Dorsolateral prefrontal cortex (tissue), 120 donors: ENCODE measurements at regions of chr19 and their contacts with region 1.

Region 1: GRCh38 chr19:56838909-56839651 is 1.4 kb downstream of the PEG3 start:
- DNase-seq: peak; percentile 95 to 100 (median 98)
- H3K4me3 ChIP-seq: peak overlapping the region in 58 of 59 donors; percentile 47 to 86 (median 72)
- H3K27ac ChIP-seq: peak overlapping the region in 55 of 59 donors; percentile 63 to 99 (median 95)
- H3K27me3 ChIP-seq: no peaks in the 10 kb centered on the region
- CTCF ChIP-seq: no peak

Region 2: DNA sequence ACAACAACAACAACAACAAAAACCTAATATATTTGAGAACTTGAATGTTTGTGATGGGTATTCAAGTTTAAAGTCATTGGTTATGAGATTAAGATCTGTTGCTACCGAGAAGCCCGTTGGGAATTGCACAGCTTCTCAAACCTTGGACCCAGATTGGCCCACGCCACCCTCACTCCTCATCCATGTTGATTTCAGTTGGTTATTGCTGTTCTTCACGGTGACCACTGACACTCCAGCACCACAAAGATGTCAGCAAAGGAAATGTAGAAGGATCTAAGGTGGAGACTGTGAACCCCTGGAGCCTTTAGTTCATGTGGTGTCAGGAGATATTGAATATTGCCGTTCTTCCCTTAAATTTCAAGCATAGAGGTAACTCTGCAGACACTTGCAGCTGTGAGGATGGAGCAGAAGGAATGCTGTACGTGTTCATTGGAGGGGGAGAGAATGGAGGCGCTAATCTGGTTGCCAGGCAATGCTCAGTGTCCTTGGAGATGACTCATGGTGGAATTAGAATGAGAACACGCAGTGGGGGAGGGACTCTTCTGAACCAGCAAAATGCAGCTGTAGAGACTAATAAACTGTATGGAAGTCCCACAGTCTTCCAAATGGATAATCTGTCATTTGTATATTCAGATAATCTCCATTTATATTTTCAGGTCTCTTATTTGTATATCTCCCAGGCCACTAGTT is 146.7 kb before region 1 on chr19:
- intact Hi-C with region 1: loop called (anchors 5 kb)
- DNase-seq: peak in 9 of 10 donors; percentile 24 to 91 (median 69)
- H3K4me3 ChIP-seq: peak overlapping the region in 8 of 59 donors; percentile 1 to 22 (median 14)
- H3K27ac ChIP-seq: peak overlapping the region in 19 of 59 donors; percentile 3 to 92 (median 84)
- H3K27me3 ChIP-seq: no peaks in the 10 kb centered on the region
- CTCF ChIP-seq: peak in 14 of 56 donors; percentile 5 to 33 (median 18)

Region 3: GRCh38 chr19:56725829-56726424 is 113.2 kb before region 1 on chr19:
- intact Hi-C with region 1: loop called (anchors 2 to 5 kb)
- DNase-seq: peak in 1 of 10 donors; percentile 65
- H3K4me3 ChIP-seq: peak overlapping the region in 29 of 59 donors; percentile 2 to 43 (median 20)
- H3K27ac ChIP-seq: peak overlapping the region in 56 of 59 donors; percentile 22 to 92 (median 77)
- H3K27me3 ChIP-seq: no peaks in the 10 kb centered on the region
- CTCF ChIP-seq: peak; percentile 53 to 89 (median 77)

Region 4: DNA sequence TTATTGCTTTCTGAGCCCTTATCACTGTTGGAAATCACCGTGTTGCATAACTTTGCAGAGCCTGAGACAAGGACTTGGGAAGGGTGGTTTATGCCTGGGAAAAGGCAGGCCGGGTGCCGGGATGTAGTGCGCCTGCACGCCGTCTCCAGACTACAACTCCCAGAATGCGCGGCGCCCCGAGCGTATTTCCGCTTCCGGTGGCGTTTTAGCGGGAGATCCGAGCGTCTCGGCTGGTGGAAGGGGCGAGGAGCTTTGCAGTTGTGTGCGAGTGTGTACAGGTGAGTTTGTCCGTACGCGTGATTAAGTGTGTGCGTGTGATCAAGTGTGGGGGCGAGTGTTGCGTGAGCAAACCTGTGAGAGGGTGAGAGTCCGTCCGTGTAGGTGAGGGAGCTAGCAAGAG is 73.9 kb before region 1 on chr19:
- intact Hi-C with region 1: loop called in 1 of 2 experiments (anchors 5 kb)
- DNase-seq: peak; percentile 76 to 93 (median 84)
- H3K4me3 ChIP-seq: peak overlapping the region; percentile 45 to 93 (median 72)
- H3K27ac ChIP-seq: peak overlapping the region in 34 of 59 donors; percentile 4 to 76 (median 47)
- H3K27me3 ChIP-seq: no peaks in the 10 kb centered on the region
- CTCF ChIP-seq: peak in 9 of 56 donors; percentile 9 to 29 (median 20)

Region 5: DNA sequence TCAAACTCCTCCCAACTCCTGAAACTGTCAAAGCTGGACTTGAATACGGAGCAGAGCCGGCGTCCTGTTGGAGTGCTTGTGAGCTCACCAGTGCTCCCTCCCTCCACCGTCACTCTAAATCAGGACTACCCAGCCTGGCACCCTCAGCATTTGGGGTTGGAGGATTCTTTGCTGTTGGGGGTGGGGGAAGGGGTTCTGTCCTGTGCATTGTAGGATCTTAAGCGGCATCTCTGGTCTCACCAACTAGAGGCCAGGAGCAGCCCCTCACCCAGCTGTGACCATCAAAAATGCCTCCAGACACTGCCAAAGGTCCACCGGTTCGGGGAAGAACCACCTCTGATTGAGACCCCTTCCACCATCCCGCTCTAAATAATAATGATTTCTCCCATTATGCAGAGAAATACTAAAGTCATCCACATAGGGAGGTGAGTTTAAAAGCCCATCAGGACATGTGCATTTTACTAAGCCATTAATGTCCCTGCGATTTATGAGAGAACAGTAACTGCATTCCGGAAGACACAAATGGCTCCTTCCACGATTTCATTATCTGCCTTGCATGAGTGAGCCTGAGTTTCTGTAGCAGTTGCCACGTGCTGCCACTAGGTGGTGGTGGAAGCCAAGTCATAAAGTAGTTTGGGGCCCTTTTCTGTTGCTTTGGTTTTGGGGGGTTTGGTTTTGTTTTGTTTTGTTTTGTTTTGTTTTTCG is 264.6 kb after region 1 on chr19:
- intact Hi-C with region 1: loop called (anchors 5 kb)
- DNase-seq: peak; percentile 59 to 88 (median 74)
- H3K4me3 ChIP-seq: peak overlapping the region in 58 of 59 donors; percentile 4 to 61 (median 45)
- H3K27ac ChIP-seq: peak overlapping the region in 1 of 59 donors; percentile 22
- H3K27me3 ChIP-seq: peaks cover 0 to 32% (median 18%) of the 10 kb centered on the region in 45 donors
- CTCF ChIP-seq: peak; percentile 68 to 96 (median 90)

Region 6: DNA sequence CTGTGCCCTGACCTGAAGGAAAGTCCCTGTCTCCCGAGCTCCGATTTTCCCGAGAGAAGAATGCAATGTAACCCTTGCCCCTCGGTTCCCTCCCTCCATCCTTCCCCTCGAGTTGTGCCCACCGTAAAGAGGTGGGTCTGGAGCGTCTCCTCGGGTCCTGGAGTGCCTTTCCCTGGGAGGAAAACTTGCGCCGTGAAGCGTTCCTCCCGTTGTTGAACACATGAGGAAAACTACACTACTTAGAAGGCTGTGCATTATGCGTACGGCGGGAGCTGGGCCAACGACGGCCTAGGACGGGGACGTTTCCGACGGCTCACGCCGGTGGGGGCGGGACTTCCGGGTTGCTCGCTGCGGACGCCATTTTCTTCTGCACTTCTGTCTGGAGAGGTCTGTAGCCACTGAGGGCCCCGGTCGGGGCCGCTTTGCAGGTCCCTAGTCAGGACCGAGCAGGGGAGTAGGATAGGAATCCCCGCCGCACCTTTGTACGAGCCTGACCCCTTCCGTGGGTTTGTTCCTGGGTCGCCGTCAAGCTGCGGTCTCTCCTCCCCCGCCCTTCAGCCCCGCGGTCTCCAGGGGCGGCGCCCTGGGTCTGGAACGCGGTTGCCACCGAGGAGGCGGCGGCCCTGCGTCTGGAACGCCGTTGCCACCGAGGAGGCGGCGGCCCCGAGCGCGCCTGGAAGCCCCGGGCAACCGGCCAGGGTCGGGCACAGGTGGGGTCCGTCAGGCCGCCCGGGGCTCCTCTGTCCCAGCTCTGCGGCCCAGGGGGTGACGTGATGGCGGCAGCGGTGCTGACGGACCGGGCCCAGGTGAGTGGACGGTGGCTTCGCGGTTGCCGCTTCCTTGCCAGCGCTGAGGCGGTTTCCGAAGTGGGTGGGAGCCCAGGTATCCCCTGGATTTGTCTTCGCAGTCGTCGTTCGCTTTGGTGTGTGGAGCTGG is 352.3 kb after region 1 on chr19 and contains the start of gene ZNF264:
- intact Hi-C with region 1: no loop called
- DNase-seq: peak; percentile 85 to 94 (median 92)
- H3K4me3 ChIP-seq: peak within 1 kb of the TSS; percentile 61 to 100 (median 97)
- H3K27ac ChIP-seq: peak within 1 kb of the TSS in 58 of 59 donors; percentile 69 to 96 (median 88)
- H3K27me3 ChIP-seq: peaks cover 0 to 10% (median 0%) of the 10 kb centered on the region in 45 donors
- CTCF ChIP-seq: peak in 33 of 56 donors; percentile 3 to 45 (median 24)
- total RNA-seq, gene ZNF264: 28.2 to 58.6 (median 43.9) TPM